ENCODE measurements at regions of chr9 and their contacts with region 1.

Region 1: DNA sequence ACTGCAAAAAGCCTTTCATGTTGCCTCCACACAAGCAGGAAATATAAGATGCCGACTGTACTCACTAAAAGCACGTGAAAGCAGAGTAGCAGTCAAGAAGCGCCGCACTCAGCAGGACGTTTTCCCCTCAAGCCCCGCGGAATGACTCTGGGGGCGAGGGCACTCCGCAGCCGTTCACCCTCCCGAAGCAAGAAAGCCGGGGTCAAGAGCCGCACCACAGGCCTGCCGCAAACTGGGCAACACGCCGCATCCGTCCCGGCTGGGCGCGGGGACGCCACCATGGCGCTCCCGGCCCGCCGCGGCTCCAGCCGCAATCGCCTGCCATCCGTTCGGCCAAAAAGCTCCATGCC is 364 bp downstream of the RPS6 start:
- DNase-seq: no peak
- H3K4me3 ChIP-seq: peak overlapping the region; percentile 40 to 67 (median 64)
- H3K27ac ChIP-seq: peak overlapping the region; percentile 87 to 93 (median 90)
- H3K4me1 ChIP-seq: peaks cover 3 to 30% (median 19%) of the 10 kb centered on the region in 4 donors
- H3K27me3 ChIP-seq: no peaks in the 10 kb centered on the region
- CTCF ChIP-seq: no peak
- EP300 ChIP-seq: no peak
- POLR2A ChIP-seq: no peak

Region 2: DNA sequence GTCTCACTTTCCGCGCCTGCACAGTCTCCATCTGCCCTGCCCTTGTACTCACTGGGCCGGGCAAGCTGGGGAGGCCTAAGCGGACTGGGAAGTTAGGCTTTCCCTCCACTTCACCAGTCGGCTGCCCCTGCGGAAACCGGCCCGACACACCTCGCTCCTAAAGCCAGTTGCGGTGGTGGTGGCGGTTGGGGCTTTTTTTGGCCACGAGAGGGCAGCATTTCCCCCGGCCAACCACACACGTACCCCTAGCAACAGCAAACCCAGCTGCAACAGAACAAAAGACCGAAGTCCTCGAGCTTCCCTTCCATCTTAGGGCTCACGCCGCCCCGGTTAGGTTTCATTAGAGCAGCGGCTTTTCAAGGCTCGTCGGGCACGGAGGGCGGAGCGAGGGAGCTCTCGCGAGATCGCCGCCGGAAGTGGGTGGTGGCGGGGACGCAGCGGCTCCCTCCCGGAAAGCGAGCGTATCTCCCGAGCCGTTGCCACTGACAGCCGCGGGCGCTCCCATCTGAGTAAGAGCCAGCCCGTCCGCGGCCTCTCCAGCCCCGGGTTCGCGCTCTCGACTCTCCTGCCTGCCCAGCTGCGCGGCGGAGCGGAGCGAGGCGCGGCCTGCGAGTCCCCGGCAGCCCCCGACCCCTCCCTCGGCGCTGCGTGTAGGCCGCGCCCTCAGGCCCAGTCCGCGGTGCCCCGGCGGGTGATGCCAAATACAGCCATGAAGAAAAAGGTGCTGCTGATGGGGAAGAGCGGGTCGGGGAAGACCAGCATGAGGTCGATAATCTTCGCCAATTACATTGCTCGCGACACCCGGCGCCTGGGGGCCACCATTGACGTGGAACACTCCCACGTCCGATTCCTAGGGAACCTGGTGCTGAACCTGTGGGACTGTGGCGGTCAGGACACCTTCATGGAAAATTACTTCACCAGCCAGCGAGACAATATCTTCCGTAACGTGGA is 330.4 kb before region 1 on chr9 and contains the start of gene RRAGA:
- intact Hi-C with region 1: loop called (anchors 2 kb)
- DNase-seq: peak; percentile 97
- H3K4me3 ChIP-seq: peak within 1 kb of the TSS; percentile 76 to 89 (median 82)
- H3K27ac ChIP-seq: peak within 1 kb of the TSS; percentile 96 to 98 (median 96)
- H3K4me1 ChIP-seq: peaks cover 0 to 41% (median 37%) of the 10 kb centered on the region in 4 donors
- H3K27me3 ChIP-seq: no peaks in the 10 kb centered on the region
- CTCF ChIP-seq: peak; percentile 62 to 84 (median 84)
- EP300 ChIP-seq: peak in 1 of 4 donors; percentile 17
- POLR2A ChIP-seq: peak; percentile 74 to 76
- total RNA-seq, gene RRAGA: 53.4 to 65.2 (median 59.9) TPM

Region 3: GRCh38 chr9:19102631-19103345 is 276.9 kb before region 1 on chr9 and contains the start of gene HAUS6:
- intact Hi-C with region 1: loop called (anchors 5 kb)
- DNase-seq: peak; percentile 99
- H3K4me3 ChIP-seq: peak within 1 kb of the TSS; percentile 66 to 78 (median 74)
- H3K27ac ChIP-seq: peak within 1 kb of the TSS; percentile 71 to 90 (median 86)
- H3K4me1 ChIP-seq: peaks cover 0 to 36% (median 27%) of the 10 kb centered on the region in 4 donors
- H3K27me3 ChIP-seq: no peaks in the 10 kb centered on the region
- CTCF ChIP-seq: peak; percentile 59 to 77 (median 74)
- EP300 ChIP-seq: peak in 1 of 4 donors; percentile 53
- POLR2A ChIP-seq: peak in 1 of 2 donors; percentile 44
- total RNA-seq, gene HAUS6: 6.9 to 12.5 (median 7.8) TPM

Region 4: DNA sequence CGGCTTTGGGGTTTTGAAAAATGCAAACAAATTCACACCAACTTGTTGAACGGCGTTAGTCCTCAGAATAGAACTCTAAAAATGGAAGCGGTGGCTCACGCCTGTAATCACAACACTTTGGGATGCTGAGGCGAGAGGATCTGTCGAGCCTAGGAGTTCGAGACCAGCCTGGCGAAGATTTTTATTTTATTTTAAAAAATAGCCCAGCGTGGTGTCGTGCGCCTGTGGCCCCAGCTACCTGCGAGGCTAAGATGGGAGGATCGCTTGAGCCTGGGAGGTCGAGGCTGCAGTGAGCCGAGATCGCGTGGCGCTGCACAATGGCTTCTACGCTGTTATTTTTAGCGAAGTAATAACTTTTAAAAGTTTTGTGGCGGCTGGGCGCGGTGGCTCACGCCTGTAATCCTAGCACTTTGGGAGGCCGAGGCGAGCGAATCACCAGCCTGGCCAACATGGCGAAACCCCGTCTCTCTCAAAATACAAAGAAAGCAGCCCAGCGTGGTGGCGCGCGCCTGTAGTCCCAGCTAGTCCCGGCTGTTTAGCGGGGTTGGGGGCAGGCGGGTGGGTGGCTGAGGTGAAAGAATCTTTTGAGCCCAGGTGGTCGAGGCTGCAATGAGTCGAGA is 251.7 kb before region 1 on chr9:
- intact Hi-C with region 1: loop called (anchors 10 kb)
- DNase-seq: peak; percentile 72
- H3K4me3 ChIP-seq: peak overlapping the region; percentile 67 to 90 (median 80)
- H3K27ac ChIP-seq: peak overlapping the region; percentile 94 to 99 (median 96)
- H3K4me1 ChIP-seq: peaks cover 0 to 26% (median 15%) of the 10 kb centered on the region in 4 donors
- H3K27me3 ChIP-seq: no peaks in the 10 kb centered on the region
- CTCF ChIP-seq: no peak
- EP300 ChIP-seq: no peak
- POLR2A ChIP-seq: no peak

Region 5: DNA sequence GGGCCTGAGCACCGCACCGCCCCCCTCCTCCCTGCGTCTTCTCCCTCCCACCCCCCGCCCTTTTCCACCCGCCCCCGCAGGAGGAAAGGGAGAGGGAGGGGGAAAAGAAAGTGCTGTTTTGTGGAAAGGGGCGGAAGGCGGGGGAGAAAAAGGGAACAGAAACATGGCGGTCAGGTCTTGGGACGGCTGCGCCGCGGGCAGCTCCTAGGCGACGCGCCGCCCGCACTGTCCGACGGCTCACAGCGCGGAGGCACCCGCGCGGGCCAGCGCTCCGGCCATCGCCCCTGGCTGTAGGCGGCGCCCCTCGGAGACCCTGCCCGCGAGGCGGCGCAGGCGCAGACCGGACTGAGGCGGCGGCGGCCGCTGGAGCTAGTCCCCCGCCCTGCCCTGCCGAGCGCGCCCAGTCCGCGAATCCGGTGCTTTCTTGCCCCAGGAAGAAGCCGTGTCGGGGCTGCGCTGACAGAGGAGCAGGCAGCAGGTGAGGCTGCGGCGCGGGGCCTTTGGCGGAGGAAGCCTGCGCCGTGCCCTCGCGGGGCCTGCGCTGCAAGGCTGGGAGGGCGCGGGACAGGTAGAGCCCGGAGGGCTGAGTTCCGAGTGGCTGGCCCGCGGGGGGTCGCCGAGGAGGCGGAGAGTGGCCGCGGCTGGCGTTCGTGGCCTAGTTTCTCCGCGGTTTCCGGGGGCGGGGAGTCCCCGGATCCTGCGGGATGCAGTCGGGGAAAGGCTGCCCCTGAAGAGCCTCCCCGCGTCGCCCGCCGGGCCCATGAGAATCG is 149.1 kb before region 1 on chr9 and contains the start of gene DENND4C:
- intact Hi-C with region 1: loop called (anchors 1 kb)
- DNase-seq: peak; percentile 90
- H3K4me3 ChIP-seq: peak within 1 kb of the TSS; percentile 67 to 99 (median 98)
- H3K27ac ChIP-seq: peak within 1 kb of the TSS; percentile 93 to 100 (median 98)
- H3K4me1 ChIP-seq: peaks cover 0 to 46% (median 23%) of the 10 kb centered on the region in 4 donors
- H3K27me3 ChIP-seq: no peaks in the 10 kb centered on the region
- CTCF ChIP-seq: no peak
- EP300 ChIP-seq: no peak
- POLR2A ChIP-seq: peak; percentile 60 to 63
- total RNA-seq, gene DENND4C: 75.6 to 109 (median 101) TPM

Region 6: DNA sequence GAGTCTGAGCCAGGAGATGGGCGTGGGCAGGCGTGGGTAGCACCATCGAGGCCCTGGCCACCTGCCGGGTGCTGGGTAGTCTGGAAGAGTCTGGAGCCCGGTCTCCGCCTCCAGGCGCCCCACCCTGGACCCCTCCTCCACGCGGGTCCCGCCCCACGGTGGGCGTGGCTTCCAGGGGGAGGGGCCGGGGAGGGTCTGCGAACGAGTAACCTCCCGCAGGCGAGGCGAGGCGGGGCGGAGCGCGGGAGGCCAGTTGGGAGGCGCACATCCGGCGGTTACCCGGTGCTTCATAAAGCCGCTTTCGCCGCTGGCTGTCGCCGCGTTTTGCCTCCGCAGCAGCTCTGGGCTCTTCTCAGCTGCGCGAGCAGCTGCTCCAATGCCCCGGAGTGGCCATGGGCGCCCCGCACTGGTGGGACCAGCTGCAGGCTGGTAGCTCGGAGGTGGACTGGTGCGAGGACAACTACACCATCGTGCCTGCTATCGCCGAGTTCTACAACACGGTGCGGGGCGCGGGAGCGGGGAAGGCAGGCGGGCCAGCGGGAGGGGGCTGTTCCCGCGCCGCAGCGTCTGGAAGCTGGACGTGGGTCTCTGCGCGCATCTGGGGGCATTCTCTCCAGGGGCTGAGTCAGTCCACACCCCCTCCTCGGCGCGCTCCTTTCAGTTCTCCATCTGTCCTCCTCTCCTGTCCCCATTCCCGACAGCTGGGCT is 29.2 kb after region 1 on chr9 and contains the start of gene ACER2:
- intact Hi-C with region 1: loop called (anchors 2 kb)
- DNase-seq: peak; percentile 96
- H3K4me3 ChIP-seq: peak within 1 kb of the TSS; percentile 81 to 85 (median 83)
- H3K27ac ChIP-seq: peak within 1 kb of the TSS; percentile 80 to 87 (median 86)
- H3K4me1 ChIP-seq: peaks cover 0 to 19% (median 11%) of the 10 kb centered on the region in 4 donors
- H3K27me3 ChIP-seq: no peaks in the 10 kb centered on the region
- CTCF ChIP-seq: no peak
- EP300 ChIP-seq: no peak
- POLR2A ChIP-seq: peak; percentile 78 to 86
- total RNA-seq, gene ACER2: 3.1 to 4.3 (median 3.4) TPM

Region 7: GRCh38 chr9:19456996-19457692 is 77.5 kb after region 1 on chr9:
- intact Hi-C with region 1: loop called (anchors 2 kb)
- DNase-seq: peak; percentile 84
- H3K4me3 ChIP-seq: peak overlapping the region in 3 of 4 donors; percentile 2 to 29 (median 15)
- H3K27ac ChIP-seq: peak overlapping the region in 3 of 4 donors; percentile 13 to 45 (median 33)
- H3K4me1 ChIP-seq: peaks cover 0 to 11% (median 4%) of the 10 kb centered on the region in 4 donors
- H3K27me3 ChIP-seq: no peaks in the 10 kb centered on the region
- CTCF ChIP-seq: peak; percentile 91 to 97 (median 92)
- EP300 ChIP-seq: no peak
- POLR2A ChIP-seq: no peak

Region 8: DNA sequence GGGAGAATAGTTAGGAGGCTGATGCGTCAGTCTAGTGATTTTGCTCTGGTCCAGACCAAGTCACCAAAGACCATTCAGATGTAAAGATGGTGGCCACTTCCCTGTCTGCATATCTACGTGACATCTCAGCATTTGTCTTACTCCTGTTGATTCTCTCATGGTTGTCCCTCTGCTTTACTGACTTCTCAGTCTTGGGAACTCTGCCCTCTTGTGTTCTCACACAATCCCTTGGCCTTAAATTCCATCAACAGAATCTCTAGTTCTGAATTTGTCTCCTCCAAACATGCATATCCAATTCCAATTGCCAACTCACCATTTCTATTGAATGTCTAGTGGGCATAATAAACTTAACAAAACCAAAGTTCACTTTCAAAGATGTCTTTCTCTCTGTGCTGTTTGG is 261.4 kb after region 1 on chr9:
- intact Hi-C with region 1: no loop called
- DNase-seq: no peak
- H3K4me3 ChIP-seq: no peak overlapping the region
- H3K27ac ChIP-seq: no peak overlapping the region
- H3K4me1 ChIP-seq: no peaks in the 10 kb centered on the region
- H3K27me3 ChIP-seq: no peaks in the 10 kb centered on the region
- CTCF ChIP-seq: no peak
- EP300 ChIP-seq: no peak
- POLR2A ChIP-seq: no peak

Measured in sigmoid colon (tissue), 7 donors.